ENCODE measurements at regions of chr7 and their contacts with region 1.

Region 1: GRCh38 chr7:100586266-100587025 is at the start of gene FBXO24:
- DNase-seq: peak; percentile 100
- CTCF ChIP-seq: no peak

Region 2: DNA sequence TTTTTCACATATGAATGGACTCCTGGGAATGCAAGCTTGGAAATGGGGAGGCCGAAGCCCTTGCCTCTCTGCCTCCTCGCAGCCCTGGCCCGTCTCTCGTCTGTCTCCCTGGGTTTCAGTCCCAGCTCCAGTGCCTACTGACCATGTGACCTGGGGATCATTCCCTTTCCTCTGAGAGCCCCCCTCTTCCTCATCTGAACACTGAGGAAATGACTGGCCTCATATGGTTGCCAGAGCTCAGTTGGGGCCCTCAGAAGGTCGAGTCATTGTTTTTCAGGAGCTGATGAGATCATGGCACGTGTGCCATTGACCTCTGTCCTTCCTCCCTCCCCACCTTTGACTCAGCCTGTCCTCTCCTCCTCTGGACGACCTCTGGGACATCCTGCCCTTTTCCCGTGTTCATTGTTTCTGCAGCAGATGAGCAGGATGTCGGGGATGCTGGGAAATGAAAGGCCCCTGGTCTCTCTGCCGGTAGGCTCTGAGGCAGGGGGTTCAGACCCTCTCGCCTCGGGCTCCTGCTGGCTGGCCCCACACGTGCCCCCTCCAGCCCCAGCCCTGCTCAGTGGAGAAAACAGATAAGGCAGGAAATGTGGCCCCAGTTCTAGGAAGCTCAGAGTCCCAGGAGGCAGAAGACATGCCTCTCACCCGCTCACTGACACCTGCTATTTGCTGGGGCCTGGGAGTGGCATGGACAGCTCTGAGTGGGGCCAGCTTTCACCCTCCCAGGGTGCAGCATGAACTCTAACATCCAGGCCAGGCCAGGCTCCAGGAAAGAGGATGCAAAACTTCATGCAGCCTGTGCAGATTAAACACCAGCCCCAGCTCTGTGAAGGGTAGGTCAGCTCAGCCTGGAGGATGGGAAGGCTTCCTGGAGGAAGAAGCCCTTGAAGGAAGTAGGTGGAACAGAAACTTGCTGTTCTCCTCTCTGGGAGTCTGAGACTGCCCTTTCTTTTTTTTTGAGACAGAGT is 141.9 kb before region 1 on chr7:
- CTCF ChIA-PET with region 1: no interaction called
- POLR2A ChIA-PET with region 1: no interaction called
- DNase-seq: peak; percentile 39
- CTCF ChIP-seq: no peak

Region 3: DNA sequence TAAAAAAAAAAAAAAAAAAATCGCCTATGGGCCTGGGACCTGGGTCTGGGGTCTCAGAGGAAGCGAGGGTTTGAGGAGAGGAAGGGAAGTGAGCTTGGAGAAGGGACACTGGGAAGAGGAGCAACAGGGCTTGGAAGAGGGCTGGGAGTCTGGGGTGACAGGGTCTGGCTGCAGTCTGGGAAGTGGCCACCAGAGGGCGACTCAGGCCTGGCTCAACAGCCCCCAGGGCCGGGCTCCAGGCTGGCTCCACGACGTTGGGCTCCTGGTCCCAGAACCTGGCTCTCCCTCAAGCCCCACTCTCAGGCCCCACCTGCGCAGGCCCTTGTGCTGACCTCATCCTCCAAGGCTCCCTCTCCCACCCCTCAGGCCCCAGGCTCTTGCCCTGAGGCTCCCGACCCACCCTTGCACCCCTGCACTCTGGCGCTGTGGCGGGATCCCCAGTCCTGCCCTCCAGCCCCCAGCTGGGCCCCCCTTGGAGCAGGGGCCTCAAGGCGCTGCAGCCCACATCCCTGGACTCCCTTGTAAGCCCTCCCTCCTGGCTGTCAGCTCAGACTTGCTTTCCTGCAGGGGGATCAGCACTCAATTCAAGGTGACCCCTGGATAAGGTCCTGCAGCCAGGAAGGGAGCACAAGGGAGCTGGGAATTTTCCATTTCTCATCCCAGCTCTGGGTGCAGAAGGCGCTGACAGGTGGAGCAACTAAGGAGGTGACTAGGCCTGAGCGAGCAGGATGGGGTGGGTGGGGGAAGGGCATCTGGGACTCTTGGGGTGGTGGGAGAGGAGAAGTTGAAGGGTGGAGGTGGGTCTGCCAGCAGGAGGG is 117.0 kb before region 1 on chr7:
- CTCF ChIA-PET with region 1: interaction called, 16 read pairs
- POLR2A ChIA-PET with region 1: no interaction called
- DNase-seq: peak; percentile 89
- CTCF ChIP-seq: peak; percentile 98

Region 4: GRCh38 chr7:100604028-100604975 is 17.9 kb after region 1 on chr7:
- CTCF ChIA-PET with region 1: interaction called, 21 read pairs
- POLR2A ChIA-PET with region 1: interaction called, 9 read pairs
- DNase-seq: peak; percentile 91
- CTCF ChIP-seq: peak; percentile 42

Region 5: GRCh38 chr7:100611974-100612729 is 25.7 kb after region 1 on chr7 and contains the start of gene MOSPD3:
- CTCF ChIA-PET with region 1: interaction called, 5 read pairs
- POLR2A ChIA-PET with region 1: interaction called, 14 read pairs
- DNase-seq: peak; percentile 99
- CTCF ChIP-seq: no peak

Region 6: DNA sequence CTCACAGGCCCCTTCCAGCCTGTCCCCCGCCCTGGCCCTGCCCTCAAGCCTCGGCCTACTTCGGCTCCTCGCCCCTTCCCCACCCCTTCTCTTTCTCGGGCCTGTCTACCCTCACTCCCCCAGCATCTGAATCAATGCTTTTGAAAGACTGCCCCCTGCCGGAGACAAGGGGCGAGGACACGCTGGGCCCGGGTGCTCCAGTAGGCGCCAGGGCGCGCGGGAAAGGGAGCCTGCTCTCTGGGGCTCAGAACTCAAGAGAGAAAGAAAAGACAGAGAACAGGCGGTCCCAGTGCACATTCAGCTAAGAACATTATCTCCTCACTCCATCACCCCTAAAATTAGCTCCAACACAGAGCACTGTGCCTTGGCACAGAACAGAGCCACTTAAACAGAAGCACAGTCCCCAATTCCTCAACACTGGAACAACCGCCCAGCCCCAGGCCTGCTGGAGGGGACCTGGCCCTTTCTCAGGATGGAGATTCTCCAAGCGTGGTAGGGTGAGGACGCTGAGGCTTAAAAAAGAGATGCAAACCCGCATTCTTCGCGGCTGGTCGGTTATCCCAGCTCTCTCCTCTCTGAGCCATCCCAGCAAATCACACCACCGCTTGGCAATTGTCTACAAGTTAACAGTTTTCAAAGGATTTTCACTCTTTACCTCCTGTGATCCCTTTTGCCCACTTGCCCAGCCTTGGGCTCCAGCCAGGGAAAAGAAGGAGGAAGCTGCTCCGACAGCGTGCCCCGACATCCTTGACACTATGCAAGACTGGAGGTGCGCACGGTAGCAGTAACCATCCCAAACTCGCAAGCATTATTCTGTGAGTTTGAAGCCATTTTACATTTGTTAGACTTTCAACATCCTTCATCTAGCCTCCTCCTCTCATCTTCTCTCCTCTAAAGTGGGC is 105.5 kb after region 1 on chr7:
- CTCF ChIA-PET with region 1: interaction called, 16 read pairs
- POLR2A ChIA-PET with region 1: interaction called, 3 read pairs
- DNase-seq: peak; percentile 87
- CTCF ChIP-seq: peak; percentile 97

Region 7: DNA sequence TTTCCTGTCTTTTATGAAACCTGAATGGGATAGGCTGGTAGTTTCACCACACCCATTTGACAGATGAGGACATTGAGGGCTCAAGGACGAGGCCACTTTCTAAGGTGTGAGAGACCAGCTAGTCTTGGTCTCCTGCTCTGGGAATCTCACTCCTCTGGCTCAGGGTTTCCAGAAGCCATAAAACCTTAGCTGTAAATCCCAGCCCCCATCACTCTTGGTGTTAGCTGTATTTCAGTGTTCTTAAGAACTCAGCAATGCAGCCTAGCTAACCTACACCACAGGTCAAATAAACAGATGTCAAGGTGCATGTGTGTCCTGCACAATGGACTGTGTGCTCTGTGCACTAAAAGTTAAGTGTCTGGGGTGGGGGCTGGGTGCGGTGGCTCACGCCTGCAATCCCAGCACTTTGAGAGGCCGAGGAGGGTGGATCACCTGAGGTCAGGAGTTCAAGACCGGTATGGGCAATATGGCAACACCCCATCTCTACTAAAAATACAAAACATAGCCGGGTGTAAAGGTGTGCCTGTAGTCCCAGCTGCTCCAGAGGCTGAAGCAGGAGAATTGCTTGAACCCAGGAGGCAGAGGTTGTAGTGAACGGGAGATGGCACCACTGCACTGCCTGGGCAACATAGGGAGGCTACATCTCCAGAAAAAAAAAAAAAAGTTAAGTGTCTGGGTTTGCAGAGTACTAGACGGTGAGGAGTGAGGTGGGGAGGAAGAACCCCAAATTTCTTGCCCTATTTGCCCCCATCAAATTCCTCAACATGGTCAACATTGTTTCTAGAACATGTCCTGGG is 133.3 kb after region 1 on chr7:
- CTCF ChIA-PET with region 1: interaction called, 10 read pairs
- POLR2A ChIA-PET with region 1: no interaction called
- DNase-seq: no peak
- CTCF ChIP-seq: no peak

Measured in GM10248 (cell line).